Activated B cell treated with CpG ODN at 0.5 μM for 24 hours (primary cell): ENCODE measurements at regions of chr12 and their contacts with region 1.

Region 1: GRCh38 chr12:32365473-32366064 is 33.8 kb upstream of the FGD4 start:
- DNase-seq: no peak
- ATAC-seq: peak; percentile 70
- H3K4me3 Mint-ChIP-seq: no peak overlapping the region
- H3K27ac Mint-ChIP-seq: no peak overlapping the region
- H3K4me1 Mint-ChIP-seq: no peaks in the 10 kb centered on the region
- H3K27me3 Mint-ChIP-seq: no peaks in the 10 kb centered on the region
- CTCF ChIP-seq: no peak

Region 2: GRCh38 chr12:31650927-31651326 is 714.6 kb before region 1 on chr12:
- CTCF ChIA-PET with region 1: interaction called, 16 read pairs
- POLR2A ChIA-PET with region 1: no interaction called
- intact Hi-C with region 1: loop called (anchors 1 kb)
- DNase-seq: no peak
- ATAC-seq: no peak
- H3K4me3 Mint-ChIP-seq: no peak overlapping the region
- H3K27ac Mint-ChIP-seq: no peak overlapping the region
- H3K4me1 Mint-ChIP-seq: peaks cover 26% of the 10 kb centered on the region
- H3K27me3 Mint-ChIP-seq: no peaks in the 10 kb centered on the region
- CTCF ChIP-seq: no peak

Region 3: GRCh38 chr12:32671930-32672780 is 306.6 kb after region 1 on chr12:
- CTCF ChIA-PET with region 1: interaction called, 4 read pairs
- POLR2A ChIA-PET with region 1: no interaction called
- intact Hi-C with region 1: loop called (anchors 1 kb)
- DNase-seq: no peak
- ATAC-seq: no peak
- H3K4me3 Mint-ChIP-seq: no peak overlapping the region
- H3K27ac Mint-ChIP-seq: no peak overlapping the region
- H3K4me1 Mint-ChIP-seq: peaks cover 23% of the 10 kb centered on the region
- H3K27me3 Mint-ChIP-seq: no peaks in the 10 kb centered on the region
- CTCF ChIP-seq: no peak

Region 4: GRCh38 chr12:32755654-32756475 is 390.3 kb after region 1 on chr12 and contains the start of gene YARS2:
- CTCF ChIA-PET with region 1: interaction called, 9 read pairs
- POLR2A ChIA-PET with region 1: no interaction called
- intact Hi-C with region 1: loop called (anchors 1 kb)
- DNase-seq: peak; percentile 75
- ATAC-seq: peak; percentile 87
- H3K4me3 Mint-ChIP-seq: peak within 1 kb of the TSS; percentile 95
- H3K27ac Mint-ChIP-seq: peak within 1 kb of the TSS; percentile 92
- H3K4me1 Mint-ChIP-seq: peaks cover 17% of the 10 kb centered on the region
- H3K27me3 Mint-ChIP-seq: no peaks in the 10 kb centered on the region
- CTCF ChIP-seq: no peak
- total RNA-seq, gene YARS2: 19.6 and 23.2 TPM in 2 replicates

Region 5: GRCh38 chr12:32870716-32871115 is 505.1 kb after region 1 on chr12:
- CTCF ChIA-PET with region 1: no interaction called
- POLR2A ChIA-PET with region 1: no interaction called
- intact Hi-C with region 1: no loop called
- DNase-seq: no peak
- ATAC-seq: no peak
- H3K4me3 Mint-ChIP-seq: no peak overlapping the region
- H3K27ac Mint-ChIP-seq: no peak overlapping the region
- H3K4me1 Mint-ChIP-seq: no peaks in the 10 kb centered on the region
- H3K27me3 Mint-ChIP-seq: no peaks in the 10 kb centered on the region
- CTCF ChIP-seq: no peak

Region 6: DNA sequence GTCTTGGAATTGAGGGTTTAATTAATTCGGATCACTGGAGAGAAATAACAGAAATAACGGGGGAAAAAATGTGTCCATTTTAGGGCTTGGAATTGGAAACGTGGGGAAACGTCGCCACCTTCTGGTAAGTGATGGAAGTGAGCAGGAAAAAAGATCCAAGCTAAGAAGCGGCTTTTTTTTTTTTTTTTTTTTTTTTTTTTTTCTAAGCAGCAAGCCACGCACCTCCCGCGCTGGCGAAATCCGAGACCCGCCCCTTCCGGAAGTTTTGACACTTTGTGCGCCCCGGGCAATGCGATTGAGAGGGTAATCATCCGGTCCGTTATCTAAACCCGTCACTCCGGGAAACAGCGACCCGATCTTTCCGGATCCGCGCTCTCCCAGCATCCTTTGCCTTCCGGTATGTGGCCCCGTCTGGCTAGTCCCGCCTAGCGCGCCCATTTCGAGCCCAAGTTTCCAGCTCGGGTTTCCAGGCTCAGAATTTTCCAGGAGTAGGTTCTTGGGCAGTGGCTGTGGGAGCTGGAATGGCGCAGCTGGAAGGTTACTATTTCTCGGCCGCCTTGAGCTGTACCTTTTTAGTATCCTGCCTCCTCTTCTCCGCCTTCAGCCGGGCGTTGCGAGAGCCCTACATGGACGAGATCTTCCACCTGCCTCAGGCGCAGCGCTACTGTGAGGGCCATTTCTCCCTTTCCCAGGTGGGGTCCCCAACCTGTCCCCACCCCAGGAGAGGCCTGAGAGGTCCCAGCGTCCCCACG is 1656.7 kb after region 1 on chr12 and contains the start of gene ALG10:
- CTCF ChIA-PET with region 1: no interaction called
- POLR2A ChIA-PET with region 1: interaction called, 13 read pairs
- intact Hi-C with region 1: loop called (anchors 1 kb)
- DNase-seq: peak; percentile 90
- ATAC-seq: peak; percentile 98
- H3K4me3 Mint-ChIP-seq: peak within 1 kb of the TSS; percentile 94
- H3K27ac Mint-ChIP-seq: peak within 1 kb of the TSS; percentile 92
- H3K4me1 Mint-ChIP-seq: peaks cover 16% of the 10 kb centered on the region
- H3K27me3 Mint-ChIP-seq: peaks cover 4% of the 10 kb centered on the region
- CTCF ChIP-seq: peak; percentile 53
- total RNA-seq, gene ALG10: 14.8 and 19.6 TPM in 2 replicates